Motor neuron (in vitro differentiated cells): ENCODE measurements at regions of chr4 and their contacts with region 1.

Region 1: DNA sequence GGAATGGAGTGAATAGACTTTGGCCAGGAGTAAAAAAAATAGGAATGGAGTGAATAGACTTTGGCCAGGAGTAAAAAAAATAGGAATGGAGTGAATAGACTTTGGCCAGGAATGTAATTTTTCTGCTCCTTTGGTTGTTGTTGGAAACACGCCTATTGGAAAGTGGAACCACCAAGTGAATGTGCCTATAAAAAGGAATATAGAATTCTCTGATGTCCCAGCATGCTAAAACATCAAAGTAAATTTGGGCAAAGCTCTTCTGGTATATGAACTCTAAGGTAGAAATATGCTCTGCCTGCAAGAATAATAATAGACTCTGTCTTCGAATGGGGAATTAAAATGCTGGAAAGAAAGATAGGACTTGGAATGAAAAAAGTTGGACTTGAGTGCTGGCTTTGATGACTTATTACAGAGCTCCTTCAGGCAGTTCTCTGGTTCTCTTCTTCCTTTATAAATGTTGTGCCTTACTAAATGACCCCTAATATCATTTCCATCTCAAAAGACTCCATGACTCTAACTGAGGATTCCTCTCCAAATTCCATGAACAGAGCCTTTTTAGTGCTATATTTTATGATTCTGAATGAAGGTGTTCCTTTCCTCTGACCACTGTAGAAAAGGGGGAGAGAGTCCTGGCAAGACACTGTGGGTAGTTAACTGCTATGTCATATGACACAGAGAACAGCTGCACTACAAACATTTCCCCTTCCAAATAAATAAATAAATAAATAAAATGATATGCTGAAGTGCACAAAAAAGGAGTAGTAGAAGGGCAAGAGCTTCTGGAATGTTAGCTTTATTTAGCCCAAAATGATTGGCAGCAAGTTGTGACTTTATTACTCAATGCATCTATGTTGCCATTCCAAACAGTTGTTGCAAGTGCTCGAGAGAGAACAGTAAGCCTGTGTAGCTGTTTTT is 13.5 kb upstream of the GBA3 start:
- ATAC-seq: peak in 3 of 8 experiments; percentile 32 to 42 (median 35)
- H3K4me3 ChIP-seq: no peak overlapping the region
- H3K27ac ChIP-seq: no peak overlapping the region
- H3K4me1 ChIP-seq: peaks cover 0 to 4% of the 10 kb centered on the region in 2 donors

Region 2: DNA sequence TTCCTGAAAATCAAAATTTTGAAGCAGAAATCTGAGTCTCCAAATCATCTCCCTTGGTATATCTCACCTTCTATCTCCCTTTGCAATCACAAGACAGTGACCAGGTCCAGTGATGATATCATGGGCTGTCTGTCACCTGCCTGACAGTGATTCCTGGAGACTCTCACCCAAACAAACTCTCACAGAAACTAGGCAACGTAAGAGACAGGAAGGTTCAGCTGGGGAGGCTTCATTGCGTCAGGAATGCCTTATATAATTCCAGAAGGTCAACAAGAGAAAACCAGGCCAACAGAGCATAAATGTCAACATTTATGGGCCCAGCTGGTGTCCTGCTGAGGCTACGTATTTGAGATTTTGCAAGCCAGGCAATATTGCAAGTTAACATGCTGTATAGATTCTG is 1143.3 kb before region 1 on chr4:
- in situ Hi-C with region 1: no loop called
- ATAC-seq: peak in 5 of 8 experiments; percentile 15 to 77 (median 54)
- H3K4me3 ChIP-seq: no peak overlapping the region
- H3K27ac ChIP-seq: no peak overlapping the region
- H3K4me1 ChIP-seq: peaks cover 0 to 6% of the 10 kb centered on the region in 2 donors

Region 3: GRCh38 chr4:21790438-21791029 is 888.7 kb before region 1 on chr4:
- in situ Hi-C with region 1: loop called in 5 of 9 experiments (anchors 10 to 25 kb)
- ATAC-seq: peak in 5 of 8 experiments; percentile 31 to 58 (median 35)
- H3K4me3 ChIP-seq: no peak overlapping the region
- H3K27ac ChIP-seq: no peak overlapping the region
- H3K4me1 ChIP-seq: no peaks in the 10 kb centered on the region

Region 4: GRCh38 chr4:22410645-22411247 is 268.5 kb before region 1 on chr4:
- in situ Hi-C with region 1: loop called in 8 of 9 experiments (anchors 25 kb)
- ATAC-seq: no peak
- H3K4me3 ChIP-seq: no peak overlapping the region
- H3K27ac ChIP-seq: no peak overlapping the region
- H3K4me1 ChIP-seq: no peaks in the 10 kb centered on the region